ENCODE measurements at regions of chr6 and their contacts with region 1.

Region 1: DNA sequence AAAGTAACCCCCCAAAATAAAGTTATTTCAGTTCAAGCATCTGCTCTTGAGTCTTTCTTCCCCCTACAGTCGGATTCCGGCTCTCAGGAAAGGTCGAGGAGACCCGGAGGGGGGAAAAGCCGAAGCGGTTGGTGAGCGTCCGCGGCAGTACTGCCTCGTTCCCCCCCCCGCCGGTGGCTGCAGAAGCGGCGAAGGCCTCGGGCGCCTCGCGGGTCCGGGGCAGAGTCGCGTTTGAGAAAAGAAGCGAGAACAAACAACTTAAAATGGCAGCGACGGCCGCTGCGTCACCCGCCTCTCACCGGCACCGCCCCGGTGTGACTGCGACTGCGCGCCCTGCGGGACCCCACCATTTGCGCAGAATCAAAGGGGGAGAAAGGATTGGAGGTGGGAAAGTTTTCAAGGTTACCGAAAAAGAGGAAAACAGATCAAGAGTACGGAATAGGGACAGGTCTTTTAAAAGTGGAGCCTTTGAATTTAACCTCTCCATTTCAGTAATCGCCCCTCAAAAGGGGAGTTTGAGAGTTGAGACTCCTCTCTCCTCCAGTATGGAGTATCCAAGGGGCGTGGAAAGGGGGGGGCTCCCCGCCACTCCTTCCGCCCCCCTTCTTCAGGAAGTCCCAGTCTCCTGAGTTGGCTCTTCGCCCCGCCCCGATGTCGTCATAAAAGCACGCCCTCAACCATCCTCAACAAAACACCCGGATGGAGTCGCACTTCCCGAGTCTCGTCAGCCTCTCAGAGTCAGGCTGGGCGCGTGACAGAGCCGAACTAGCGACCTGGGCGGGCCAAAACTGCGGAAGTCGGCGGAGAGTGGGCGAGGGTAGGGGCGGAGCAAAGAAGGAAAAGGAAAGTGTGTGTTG is 1.9 kb upstream of the C6orf62 start:
- DNase-seq: peak; percentile 99 to 100 (median 100)
- H3K4me3 ChIP-seq: peak overlapping the region; percentile 84 to 99 (median 92)
- H3K4me3 Mint-ChIP-seq: peak overlapping the region; percentile 95 to 99
- H3K27ac ChIP-seq: peak overlapping the region; percentile 96 to 100
- H3K27ac Mint-ChIP-seq: peak overlapping the region; percentile 96 to 100 (median 99)
- H3K4me1 ChIP-seq: peaks cover 35 to 41% of the 10 kb centered on the region in 2 donors
- H3K4me1 Mint-ChIP-seq: peaks cover 33% of the 10 kb centered on the region
- H3K27me3 ChIP-seq: no peaks in the 10 kb centered on the region
- H3K27me3 Mint-ChIP-seq: peaks cover 1 to 2% (median 1%) of the 10 kb centered on the region in 3 donors
- CTCF ChIP-seq: no peak

Region 2: DNA sequence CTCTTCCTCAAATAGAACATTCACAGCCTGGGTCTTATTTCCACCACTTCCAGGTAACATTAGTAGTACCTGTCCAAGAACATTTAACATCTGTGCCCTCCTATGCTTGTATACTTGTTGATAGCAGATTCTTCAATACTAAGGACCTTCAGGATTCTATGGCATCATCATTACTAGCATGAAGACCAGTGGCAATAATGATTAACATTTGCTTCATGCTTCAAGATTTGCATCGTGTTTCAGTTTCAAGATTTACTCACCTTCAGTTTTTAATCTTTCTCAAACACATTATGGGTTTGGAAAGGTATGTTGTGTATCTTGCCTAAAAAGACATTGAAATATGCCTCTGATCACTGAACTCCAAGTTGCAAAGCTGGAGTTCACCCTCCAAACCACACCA is 1007.6 kb before region 1 on chr6:
- intact Hi-C with region 1: no loop called
- DNase-seq: no peak
- H3K4me3 ChIP-seq: no peak overlapping the region
- H3K4me3 Mint-ChIP-seq: no peak overlapping the region
- H3K27ac ChIP-seq: no peak overlapping the region
- H3K27ac Mint-ChIP-seq: no peak overlapping the region
- H3K4me1 ChIP-seq: no peaks in the 10 kb centered on the region
- H3K4me1 Mint-ChIP-seq: no peaks in the 10 kb centered on the region
- H3K27me3 ChIP-seq: no peaks in the 10 kb centered on the region
- H3K27me3 Mint-ChIP-seq: no peaks in the 10 kb centered on the region
- CTCF ChIP-seq: no peak

Region 3: GRCh38 chr6:24614043-24614420 is 106.8 kb before region 1 on chr6:
- intact Hi-C with region 1: no loop called
- DNase-seq: no peak
- H3K4me3 ChIP-seq: no peak overlapping the region
- H3K4me3 Mint-ChIP-seq: no peak overlapping the region
- H3K27ac ChIP-seq: no peak overlapping the region
- H3K27ac Mint-ChIP-seq: peak overlapping the region in 1 of 7 donors; percentile 27
- H3K4me1 ChIP-seq: no peaks in the 10 kb centered on the region
- H3K4me1 Mint-ChIP-seq: no peaks in the 10 kb centered on the region
- H3K27me3 ChIP-seq: peaks cover 0 to 8% of the 10 kb centered on the region in 2 donors
- H3K27me3 Mint-ChIP-seq: peaks cover 0 to 15% (median 6%) of the 10 kb centered on the region in 3 donors
- CTCF ChIP-seq: no peak

Region 4: GRCh38 chr6:24666641-24667377 is 54.0 kb before region 1 on chr6 and contains the starts of genes ACOT13 and TDP2:
- intact Hi-C with region 1: loop called in 1 of 2 experiments (anchors 10 kb)
- DNase-seq: peak; percentile 96 to 99 (median 96)
- H3K4me3 ChIP-seq: peak within 1 kb of the TSS; percentile 79 to 99 (median 90)
- H3K4me3 Mint-ChIP-seq: peak within 1 kb of the TSS; percentile 96 to 98
- H3K27ac ChIP-seq: peak within 1 kb of the TSS; percentile 91 to 94
- H3K27ac Mint-ChIP-seq: peak within 1 kb of the TSS; percentile 94 to 99 (median 98)
- H3K4me1 ChIP-seq: peaks cover 21 to 29% of the 10 kb centered on the region in 2 donors
- H3K4me1 Mint-ChIP-seq: peaks cover 40% of the 10 kb centered on the region
- H3K27me3 ChIP-seq: no peaks in the 10 kb centered on the region
- H3K27me3 Mint-ChIP-seq: peaks cover 0 to 2% (median 0%) of the 10 kb centered on the region in 3 donors
- CTCF ChIP-seq: peak; percentile 65
- polyA plus RNA-seq, gene ACOT13: 1.7 to 20.1 (median 14.5) TPM
- polyA plus RNA-seq, gene TDP2: 21.0 to 24.2 (median 21.8) TPM

Region 5: DNA sequence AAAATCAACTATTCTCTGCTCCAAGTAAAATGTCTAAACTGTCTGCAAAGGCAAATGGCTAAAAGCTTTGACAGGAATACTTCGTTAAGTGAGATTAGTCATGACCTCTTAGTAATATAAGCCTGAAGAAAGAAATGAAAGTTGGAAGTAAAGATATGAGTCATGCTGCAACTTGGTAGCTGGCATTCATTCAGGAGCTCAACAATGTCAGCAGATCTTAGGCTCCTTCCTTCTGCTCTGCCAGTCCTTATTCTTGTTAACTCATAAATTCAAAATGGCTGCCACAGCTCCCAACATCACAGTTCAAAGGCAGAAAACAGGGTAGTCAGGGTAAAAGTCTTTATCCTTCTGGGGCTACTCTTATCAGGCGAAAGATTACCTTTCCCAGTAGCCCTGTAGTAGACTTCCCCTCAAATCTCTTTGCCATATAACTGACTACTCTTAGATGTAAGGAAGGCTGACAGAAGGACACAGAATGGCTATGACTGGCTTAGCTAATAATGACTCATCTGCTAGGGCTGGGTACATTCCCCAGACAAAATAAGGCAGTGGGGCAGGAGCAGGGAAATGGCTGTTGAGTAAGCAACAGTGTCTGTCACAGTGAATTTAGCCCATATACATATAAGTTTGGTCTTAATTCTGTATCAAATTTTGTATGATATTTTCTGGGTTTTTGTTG is 22.6 kb after region 1 on chr6:
- intact Hi-C with region 1: loop called in 1 of 2 experiments (anchors 2 kb)
- DNase-seq: peak; percentile 88 to 97 (median 95)
- H3K4me3 ChIP-seq: peak overlapping the region in 2 of 3 experiments; percentile 8 to 58
- H3K4me3 Mint-ChIP-seq: peak overlapping the region; percentile 25 to 71
- H3K27ac ChIP-seq: peak overlapping the region; percentile 78 to 99
- H3K27ac Mint-ChIP-seq: peak overlapping the region; percentile 92 to 99 (median 95)
- H3K4me1 ChIP-seq: peaks cover 58 to 59% of the 10 kb centered on the region in 2 donors
- H3K4me1 Mint-ChIP-seq: peaks cover 55% of the 10 kb centered on the region
- H3K27me3 ChIP-seq: no peaks in the 10 kb centered on the region
- H3K27me3 Mint-ChIP-seq: no peaks in the 10 kb centered on the region
- CTCF ChIP-seq: no peak

Region 6: DNA sequence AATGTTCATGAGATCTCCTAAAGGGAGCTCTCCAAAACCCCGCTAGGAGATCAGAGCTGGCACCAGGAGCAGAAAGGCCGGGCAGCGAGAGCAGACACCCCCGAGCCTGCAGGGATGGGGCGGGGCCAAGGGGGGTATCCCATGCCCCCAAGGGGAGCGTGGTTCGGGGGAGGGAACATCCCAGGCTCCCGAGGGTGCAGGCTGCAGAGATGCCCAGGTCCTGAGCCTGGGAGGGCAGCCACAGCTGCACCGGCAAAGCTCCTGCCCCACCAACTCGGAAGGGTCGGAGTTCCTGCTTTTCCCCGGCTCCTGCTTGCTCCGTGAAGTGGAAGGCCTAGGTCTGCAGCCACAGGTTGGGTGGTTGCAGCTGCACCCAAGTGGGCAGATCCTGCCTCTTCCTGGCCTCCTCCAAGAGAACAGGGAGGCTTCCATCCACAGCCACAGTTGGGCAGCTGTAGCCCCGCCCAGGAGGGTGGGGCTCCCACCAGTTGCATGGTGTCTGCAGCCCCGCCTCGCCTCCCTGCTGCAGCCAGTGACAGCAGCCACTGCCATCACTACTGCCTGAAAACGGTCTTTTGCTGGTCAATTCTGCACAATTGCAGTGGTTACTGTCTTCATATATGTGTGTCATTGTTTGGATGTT is 40.5 kb after region 1 on chr6:
- intact Hi-C with region 1: loop called (anchors 5 kb)
- DNase-seq: no peak
- H3K4me3 ChIP-seq: no peak overlapping the region
- H3K4me3 Mint-ChIP-seq: no peak overlapping the region
- H3K27ac ChIP-seq: no peak overlapping the region
- H3K27ac Mint-ChIP-seq: no peak overlapping the region
- H3K4me1 ChIP-seq: peaks cover 15 to 23% of the 10 kb centered on the region in 2 donors
- H3K4me1 Mint-ChIP-seq: peaks cover 17% of the 10 kb centered on the region
- H3K27me3 ChIP-seq: no peaks in the 10 kb centered on the region
- H3K27me3 Mint-ChIP-seq: peaks cover 0 to 2% (median 0%) of the 10 kb centered on the region in 3 donors
- CTCF ChIP-seq: no peak

Region 7: GRCh38 chr6:24774696-24775519 is 54.1 kb after region 1 on chr6 and contains the start of gene GMNN:
- intact Hi-C with region 1: loop called (anchors 2 to 5 kb)
- DNase-seq: peak; percentile 95 to 98 (median 96)
- H3K4me3 ChIP-seq: peak within 1 kb of the TSS; percentile 78 to 100 (median 98)
- H3K4me3 Mint-ChIP-seq: peak within 1 kb of the TSS; percentile 98 to 100
- H3K27ac ChIP-seq: peak within 1 kb of the TSS; percentile 69 to 85
- H3K27ac Mint-ChIP-seq: peak within 1 kb of the TSS; percentile 87 to 98 (median 96)
- H3K4me1 ChIP-seq: peaks cover 18% of the 10 kb centered on the region in 2 donors
- H3K4me1 Mint-ChIP-seq: peaks cover 21% of the 10 kb centered on the region
- H3K27me3 ChIP-seq: no peaks in the 10 kb centered on the region
- H3K27me3 Mint-ChIP-seq: no peaks in the 10 kb centered on the region
- CTCF ChIP-seq: no peak
- polyA plus RNA-seq, gene GMNN: 2.6 to 5.2 (median 2.9) TPM

Region 8: GRCh38 chr6:25006565-25007001 is 285.8 kb after region 1 on chr6:
- intact Hi-C with region 1: loop called in 1 of 2 experiments (anchors 10 kb)
- DNase-seq: peak; percentile 88 to 97 (median 96)
- H3K4me3 ChIP-seq: peak overlapping the region in 1 of 3 experiments; percentile 47
- H3K4me3 Mint-ChIP-seq: peak overlapping the region; percentile 49 to 67
- H3K27ac ChIP-seq: peak overlapping the region; percentile 98 to 99
- H3K27ac Mint-ChIP-seq: peak overlapping the region; percentile 95 to 100 (median 99)
- H3K4me1 ChIP-seq: peaks cover 67 to 86% of the 10 kb centered on the region in 2 donors
- H3K4me1 Mint-ChIP-seq: peaks cover 71% of the 10 kb centered on the region
- H3K27me3 ChIP-seq: no peaks in the 10 kb centered on the region
- H3K27me3 Mint-ChIP-seq: no peaks in the 10 kb centered on the region
- CTCF ChIP-seq: no peak